ENCODE measurements at regions of chr17 and their contacts with region 1.

Region 1: DNA sequence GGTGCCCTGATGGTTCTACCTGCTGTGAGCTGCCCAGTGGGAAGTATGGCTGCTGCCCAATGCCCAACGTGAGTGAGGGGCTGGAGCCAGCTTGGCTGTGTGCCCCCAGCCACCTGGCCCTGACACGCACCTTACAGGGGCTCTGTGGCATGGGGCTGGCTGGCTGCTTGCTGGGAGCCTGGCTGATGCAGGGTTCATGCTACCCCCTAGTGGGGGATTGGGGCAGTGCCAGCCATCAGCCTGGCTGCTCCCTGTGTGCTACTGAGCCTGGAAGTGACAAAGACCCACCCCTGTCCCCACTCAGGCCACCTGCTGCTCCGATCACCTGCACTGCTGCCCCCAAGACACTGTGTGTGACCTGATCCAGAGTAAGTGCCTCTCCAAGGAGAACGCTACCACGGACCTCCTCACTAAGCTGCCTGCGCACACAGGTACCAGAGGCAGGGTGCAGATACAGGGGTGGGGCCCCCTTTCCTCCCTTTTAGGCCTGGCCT is 5.7 kb downstream of the GRN start:
- DNase-seq: peak; percentile 60 to 68 (median 67)
- H3K4me3 ChIP-seq: no peak overlapping the region
- H3K4me3 Mint-ChIP-seq: no peak overlapping the region
- H3K27ac ChIP-seq: no peak overlapping the region
- H3K27ac Mint-ChIP-seq: peak overlapping the region in 2 of 7 donors; percentile 55 to 82
- H3K4me1 ChIP-seq: peaks cover 48 to 76% of the 10 kb centered on the region in 2 donors
- H3K4me1 Mint-ChIP-seq: peaks cover 54% of the 10 kb centered on the region
- H3K27me3 ChIP-seq: peaks cover 0 to 5% of the 10 kb centered on the region in 2 donors
- H3K27me3 Mint-ChIP-seq: peaks cover 5 to 18% (median 5%) of the 10 kb centered on the region in 3 donors
- CTCF ChIP-seq: peak; percentile 89

Region 2: DNA sequence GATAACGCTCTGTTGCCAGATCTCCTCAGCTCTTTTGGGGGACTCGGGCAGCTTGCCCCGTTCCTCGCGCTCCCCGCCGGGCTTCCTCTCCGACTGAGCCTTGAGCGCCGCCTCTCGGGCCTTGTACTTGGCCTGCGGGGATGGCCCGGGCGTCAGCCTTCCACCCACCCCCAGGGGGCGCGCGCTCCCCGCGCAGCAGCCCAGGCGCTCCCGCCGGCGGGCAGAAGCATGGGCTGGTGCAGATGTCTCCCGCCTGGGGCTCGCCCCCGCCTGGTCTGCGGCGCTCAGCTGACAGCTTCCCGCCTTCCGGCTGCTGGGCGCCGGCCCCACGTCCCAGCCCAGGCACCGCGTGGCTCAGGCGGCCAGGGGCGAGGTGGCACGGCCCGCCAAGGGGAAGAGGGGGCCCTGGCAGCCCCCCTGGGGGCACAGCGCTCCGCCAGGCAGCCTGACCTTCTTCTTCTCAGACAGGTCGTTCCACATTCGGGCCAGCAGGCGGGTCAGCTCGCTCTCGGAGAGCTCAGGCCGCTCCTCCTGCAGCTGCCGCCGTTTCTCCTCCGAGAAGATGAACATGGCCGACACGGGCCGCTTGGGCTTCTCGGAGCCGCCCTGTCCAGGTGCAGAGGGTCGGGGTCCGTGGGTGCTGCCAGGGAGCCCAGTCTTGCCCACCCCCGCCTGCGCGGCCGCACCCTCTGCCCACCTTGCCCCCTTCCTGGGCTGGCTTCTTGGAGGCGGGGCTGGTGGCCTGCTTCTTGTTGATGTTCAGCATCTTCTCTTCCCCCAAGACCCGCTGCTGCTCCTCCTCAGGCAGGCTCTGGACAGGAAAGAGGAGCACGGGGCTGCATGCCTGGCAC is 140.2 kb before region 1 on chr17:
- intact Hi-C with region 1: loop called in 1 of 2 experiments (anchors 2 kb)
- DNase-seq: peak; percentile 82 to 88 (median 87)
- H3K4me3 ChIP-seq: no peak overlapping the region
- H3K4me3 Mint-ChIP-seq: peak overlapping the region in 1 of 2 donors; percentile 24
- H3K27ac ChIP-seq: no peak overlapping the region
- H3K27ac Mint-ChIP-seq: peak overlapping the region in 3 of 7 donors; percentile 15 to 61 (median 58)
- H3K4me1 ChIP-seq: peaks cover 11 to 41% of the 10 kb centered on the region in 2 donors
- H3K4me1 Mint-ChIP-seq: peaks cover 40% of the 10 kb centered on the region
- H3K27me3 ChIP-seq: no peaks in the 10 kb centered on the region
- H3K27me3 Mint-ChIP-seq: peaks cover 0 to 1% (median 0%) of the 10 kb centered on the region in 3 donors
- CTCF ChIP-seq: peak; percentile 99

Region 3: GRCh38 chr17:44293509-44294226 is 57.1 kb before region 1 on chr17:
- intact Hi-C with region 1: no loop called
- DNase-seq: no peak
- H3K4me3 ChIP-seq: no peak overlapping the region
- H3K4me3 Mint-ChIP-seq: no peak overlapping the region
- H3K27ac ChIP-seq: no peak overlapping the region
- H3K27ac Mint-ChIP-seq: no peak overlapping the region
- H3K4me1 ChIP-seq: no peaks in the 10 kb centered on the region
- H3K4me1 Mint-ChIP-seq: peaks cover under 1% of the 10 kb centered on the region
- H3K27me3 ChIP-seq: peaks cover 0 to 4% of the 10 kb centered on the region in 2 donors
- H3K27me3 Mint-ChIP-seq: peaks cover 21 to 25% (median 23%) of the 10 kb centered on the region in 3 donors
- CTCF ChIP-seq: no peak

Region 4: GRCh38 chr17:44314869-44315661 is 35.7 kb before region 1 on chr17:
- intact Hi-C with region 1: loop called in 1 of 2 experiments (anchors 5 kb)
- DNase-seq: peak; percentile 25 to 36 (median 30)
- H3K4me3 ChIP-seq: peak overlapping the region in 1 of 3 experiments; percentile 54
- H3K4me3 Mint-ChIP-seq: peak overlapping the region in 1 of 2 donors; percentile 75
- H3K27ac ChIP-seq: no peak overlapping the region
- H3K27ac Mint-ChIP-seq: peak overlapping the region in 1 of 7 donors; percentile 32
- H3K4me1 ChIP-seq: peaks cover 5 to 14% of the 10 kb centered on the region in 2 donors
- H3K4me1 Mint-ChIP-seq: peaks cover 16% of the 10 kb centered on the region
- H3K27me3 ChIP-seq: peaks cover 29 to 60% of the 10 kb centered on the region in 2 donors
- H3K27me3 Mint-ChIP-seq: peaks cover 53 to 67% (median 63%) of the 10 kb centered on the region in 3 donors
- CTCF ChIP-seq: no peak

Region 5: GRCh38 chr17:44331249-44331760 is 19.5 kb before region 1 on chr17:
- intact Hi-C with region 1: no loop called
- DNase-seq: peak; percentile 82 to 93 (median 91)
- H3K4me3 ChIP-seq: peak overlapping the region in 1 of 3 experiments; percentile 12
- H3K4me3 Mint-ChIP-seq: peak overlapping the region in 1 of 2 donors; percentile 69
- H3K27ac ChIP-seq: peak overlapping the region in 1 of 2 donors; percentile 86
- H3K27ac Mint-ChIP-seq: peak overlapping the region; percentile 83 to 95 (median 89)
- H3K4me1 ChIP-seq: peaks cover 61 to 68% of the 10 kb centered on the region in 2 donors
- H3K4me1 Mint-ChIP-seq: peaks cover 65% of the 10 kb centered on the region
- H3K27me3 ChIP-seq: no peaks in the 10 kb centered on the region
- H3K27me3 Mint-ChIP-seq: no peaks in the 10 kb centered on the region
- CTCF ChIP-seq: peak; percentile 85